ENCODE measurements at regions of chr6 and their contacts with region 1.

Region 1: DNA sequence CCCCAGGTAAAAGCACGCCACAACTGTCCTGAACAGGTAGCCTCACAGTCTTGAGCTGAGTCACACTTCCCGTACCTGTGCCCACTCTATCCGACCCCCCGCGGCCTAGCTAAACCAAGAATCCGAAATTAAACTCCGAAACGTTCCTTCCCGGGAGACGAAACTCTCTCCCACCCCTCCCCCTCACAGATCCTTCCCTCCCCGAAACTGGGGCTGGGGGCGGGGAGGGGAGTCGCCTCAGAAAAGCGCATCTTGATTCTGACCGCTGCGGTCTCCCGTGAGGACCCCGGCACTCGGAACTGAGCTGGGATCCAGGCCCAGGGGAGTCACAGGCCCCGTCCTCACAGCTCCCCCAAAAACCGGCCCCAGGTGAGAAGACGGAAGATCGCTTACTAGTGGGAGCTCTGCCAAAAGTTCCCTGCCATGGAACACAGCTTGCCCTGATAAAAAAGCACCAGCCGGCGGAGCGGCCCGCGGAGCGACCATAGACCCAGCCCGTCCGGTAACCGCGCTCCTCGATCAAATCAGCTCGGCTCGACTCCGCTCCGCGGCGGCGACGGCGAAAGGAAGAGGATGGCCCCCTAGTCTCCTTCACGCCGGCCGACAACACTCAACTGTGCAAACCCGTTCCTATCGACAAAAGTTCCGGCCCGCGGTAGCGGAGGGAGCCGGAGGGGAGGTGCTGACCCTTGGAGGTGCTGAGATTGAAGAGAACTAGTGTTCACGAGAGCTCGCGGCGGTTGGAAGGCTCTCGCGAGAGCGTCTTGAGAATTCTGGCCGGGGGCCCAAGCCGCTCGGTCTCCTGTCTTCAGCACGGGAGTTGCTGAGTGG is at the start of gene CCNC:
- DNase-seq: peak; percentile 93
- ATAC-seq: peak; percentile 98
- H3K4me3 Mint-ChIP-seq: peak within 1 kb of the TSS; percentile 100
- H3K27ac Mint-ChIP-seq: peak within 1 kb of the TSS; percentile 97
- H3K4me1 Mint-ChIP-seq: peaks cover 27% of the 10 kb centered on the region
- H3K27me3 Mint-ChIP-seq: no peaks in the 10 kb centered on the region
- total RNA-seq, gene CCNC: 36.8 to 38.7 TPM

Region 2: GRCh38 chr6:99514089-99514488 is 54.2 kb before region 1 on chr6:
- CTCF ChIA-PET with region 1: interaction called, 4 read pairs
- POLR2A ChIA-PET with region 1: interaction called, 10 read pairs
- DNase-seq: no peak
- ATAC-seq: no peak
- H3K4me3 Mint-ChIP-seq: peak overlapping the region; percentile 91
- H3K27ac Mint-ChIP-seq: no peak overlapping the region
- H3K4me1 Mint-ChIP-seq: peaks cover 31% of the 10 kb centered on the region
- H3K27me3 Mint-ChIP-seq: peaks cover 6% of the 10 kb centered on the region

Region 3: GRCh38 chr6:99520855-99521632 is 47.3 kb before region 1 on chr6:
- CTCF ChIA-PET with region 1: interaction called, 12 read pairs
- POLR2A ChIA-PET with region 1: interaction called, 19 read pairs
- DNase-seq: peak; percentile 86
- ATAC-seq: peak; percentile 95
- H3K4me3 Mint-ChIP-seq: peak overlapping the region; percentile 92
- H3K27ac Mint-ChIP-seq: peak overlapping the region; percentile 97
- H3K4me1 Mint-ChIP-seq: peaks cover 21% of the 10 kb centered on the region
- H3K27me3 Mint-ChIP-seq: peaks cover 5% of the 10 kb centered on the region